ENCODE measurements at regions of chr7 and their contacts with region 1.

Region 1: GRCh38 chr7:126803060-126803665 is 449.6 kb downstream of the GRM8 start:
- DNase-seq: peak; percentile 61 to 82 (median 63)
- H3K4me3 ChIP-seq: no peak overlapping the region
- H3K27ac ChIP-seq: no peak overlapping the region
- H3K4me1 ChIP-seq: peaks cover 0 to 11% of the 10 kb centered on the region in 2 donors
- H3K27me3 ChIP-seq: no peaks in the 10 kb centered on the region
- CTCF ChIP-seq: peak; percentile 63 to 75 (median 70)
- POLR2A ChIP-seq: no peak

Region 2: GRCh38 chr7:127253281-127254162 is 450.4 kb after region 1 on chr7:
- intact Hi-C with region 1: loop called in 1 of 2 experiments (anchors 10 kb)
- DNase-seq: peak; percentile 49 to 78 (median 69)
- H3K4me3 ChIP-seq: peak overlapping the region in 2 of 4 donors; percentile 34 to 76
- H3K27ac ChIP-seq: peak overlapping the region in 2 of 5 donors; percentile 46 to 61
- H3K4me1 ChIP-seq: peaks cover 14 to 20% of the 10 kb centered on the region in 2 donors
- H3K27me3 ChIP-seq: peaks cover 33% of the 10 kb centered on the region
- CTCF ChIP-seq: peak; percentile 59 to 91 (median 74)
- POLR2A ChIP-seq: no peak

Region 3: DNA sequence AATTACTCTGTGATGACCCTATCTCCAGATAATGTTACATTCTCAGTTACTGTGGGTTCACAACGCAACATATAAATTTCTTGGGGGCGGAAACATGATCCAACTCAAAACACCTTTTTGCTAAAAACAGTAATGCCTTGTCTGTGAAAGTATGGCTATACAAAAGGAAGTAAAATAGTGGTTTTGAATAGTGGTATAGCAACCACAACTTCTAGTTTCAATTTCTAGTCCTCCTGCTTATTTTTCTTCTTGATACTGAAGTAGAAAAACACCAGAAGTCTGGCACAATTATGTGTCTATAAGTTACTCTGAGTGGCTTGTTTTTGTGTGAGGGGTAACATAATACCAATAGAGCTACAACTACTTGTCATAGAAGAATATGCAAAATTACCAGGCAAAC is 610.8 kb after region 1 on chr7:
- intact Hi-C with region 1: no loop called
- DNase-seq: no peak
- H3K4me3 ChIP-seq: no peak overlapping the region
- H3K27ac ChIP-seq: no peak overlapping the region
- H3K4me1 ChIP-seq: no peaks in the 10 kb centered on the region
- H3K27me3 ChIP-seq: peaks cover 4% of the 10 kb centered on the region
- CTCF ChIP-seq: no peak
- POLR2A ChIP-seq: no peak

Measured in adrenal gland (tissue), 19 donors.